ENCODE measurements at regions of chr20 and their contacts with region 1.

Region 1: GRCh38 chr20:8722276-8722928 is 346.5 kb upstream of the PLCB4 start:
- DNase-seq: peak; percentile 81
- H3K4me3 ChIP-seq: no peak overlapping the region
- H3K27ac ChIP-seq: no peak overlapping the region
- H3K4me1 ChIP-seq: peaks cover 11% of the 10 kb centered on the region
- H3K27me3 ChIP-seq: no peaks in the 10 kb centered on the region
- CTCF ChIP-seq: peak; percentile 84

Region 2: DNA sequence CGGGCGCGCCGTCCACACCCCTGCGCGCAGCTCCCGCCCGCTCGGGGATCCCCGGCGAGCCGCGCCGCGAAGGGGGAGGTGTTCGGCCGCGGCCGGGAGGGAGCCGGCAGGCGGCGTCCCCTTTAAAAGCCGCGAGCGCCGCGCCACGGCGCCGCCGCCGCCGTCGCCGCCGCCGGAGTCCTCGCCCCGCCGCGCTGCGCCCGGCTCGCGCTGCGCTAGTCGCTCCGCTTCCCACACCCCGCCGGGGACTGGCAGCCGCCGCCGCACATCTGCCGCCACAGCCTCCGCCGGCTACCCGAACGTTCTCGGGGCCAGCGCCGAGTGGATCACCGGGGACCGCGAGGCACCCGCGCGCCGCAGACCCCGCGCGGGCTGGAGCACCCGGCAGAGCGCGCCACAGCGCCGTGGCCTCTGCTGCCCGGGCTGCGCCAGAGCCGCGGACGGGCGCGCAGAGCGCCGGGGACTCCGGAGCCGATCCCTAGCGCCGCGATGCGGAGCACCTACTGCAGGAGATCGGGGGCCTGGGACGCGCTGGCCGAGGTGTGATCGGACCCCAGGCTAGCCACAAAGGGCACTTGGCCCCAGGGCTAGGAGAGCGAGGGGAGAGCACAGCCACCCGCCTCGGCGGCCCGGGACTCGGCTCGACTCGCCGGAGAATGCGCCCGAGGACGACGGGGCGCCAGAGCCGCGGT is 1954.7 kb before region 1 on chr20 and contains the start of gene BMP2:
- CTCF ChIA-PET with region 1: interaction called, 3 read pairs
- POLR2A ChIA-PET with region 1: no interaction called
- intact Hi-C with region 1: loop called (anchors 5 kb)
- DNase-seq: peak; percentile 49
- H3K4me3 ChIP-seq: peak within 1 kb of the TSS; percentile 41
- H3K27ac ChIP-seq: no peak within 1 kb of the TSS
- H3K4me1 ChIP-seq: peaks cover 5% of the 10 kb centered on the region
- H3K27me3 ChIP-seq: peaks cover 72% of the 10 kb centered on the region
- CTCF ChIP-seq: no peak
- total RNA-seq, gene BMP2: not detected in 2 replicates

Region 3: DNA sequence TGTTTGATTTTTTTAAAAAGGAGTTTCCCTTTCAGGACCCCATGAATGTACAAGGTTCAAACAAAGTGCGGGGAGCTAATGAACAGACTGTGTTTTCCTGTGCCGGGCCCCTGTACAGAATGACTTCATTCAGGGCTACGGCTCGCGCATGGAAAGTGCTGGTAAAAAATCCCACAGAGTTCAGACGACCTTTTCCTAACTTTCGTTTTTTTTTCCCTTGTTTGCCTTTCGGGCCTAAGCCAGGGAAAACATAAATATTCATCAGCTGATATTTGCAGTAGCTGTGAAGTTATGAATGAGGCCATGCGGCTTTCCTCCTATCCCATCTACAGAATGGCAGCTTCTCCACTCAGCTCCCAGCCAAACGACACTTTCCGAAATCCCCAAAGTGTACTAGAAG is 856.1 kb before region 1 on chr20:
- CTCF ChIA-PET with region 1: no interaction called
- POLR2A ChIA-PET with region 1: no interaction called
- intact Hi-C with region 1: loop called (anchors 10 kb)
- DNase-seq: no peak
- H3K4me3 ChIP-seq: no peak overlapping the region
- H3K27ac ChIP-seq: no peak overlapping the region
- H3K4me1 ChIP-seq: no peaks in the 10 kb centered on the region
- H3K27me3 ChIP-seq: peaks cover 72% of the 10 kb centered on the region
- CTCF ChIP-seq: no peak

Region 4: DNA sequence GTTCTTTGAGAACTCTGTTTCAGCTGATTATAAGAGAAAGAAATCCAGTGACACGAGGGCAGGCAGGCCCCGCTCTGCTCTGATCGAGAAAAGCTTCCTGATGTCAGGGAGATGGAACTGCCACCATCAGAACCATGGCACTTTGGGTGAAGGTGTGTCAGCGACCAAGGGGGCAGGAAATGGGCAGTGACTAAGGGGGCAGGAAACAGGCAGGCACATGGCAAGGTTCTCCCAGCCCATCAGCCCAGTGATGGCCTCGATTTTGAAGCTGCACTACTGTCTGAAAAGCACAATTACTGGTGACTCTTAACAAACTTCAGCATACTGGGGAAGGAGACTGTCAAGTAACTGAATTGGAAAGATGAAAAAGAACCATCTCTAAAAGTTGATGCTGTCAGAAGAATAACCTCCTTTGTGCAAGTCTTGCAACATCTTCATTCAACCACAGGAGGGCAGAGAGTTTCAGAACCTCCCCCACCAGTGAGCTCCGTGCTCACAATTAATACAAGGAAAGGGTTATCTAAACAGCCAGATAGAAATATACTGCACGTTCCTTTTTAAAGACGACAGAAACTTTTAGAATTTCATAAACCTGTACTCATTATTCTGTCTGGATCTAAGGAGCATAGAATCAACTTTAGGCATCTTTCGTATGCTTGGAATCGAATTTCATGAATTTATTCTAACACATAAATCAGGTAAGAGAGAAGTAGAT is 741.9 kb before region 1 on chr20:
- CTCF ChIA-PET with region 1: interaction called, 6 read pairs
- POLR2A ChIA-PET with region 1: no interaction called
- intact Hi-C with region 1: loop called (anchors 1 kb)
- DNase-seq: peak; percentile 58
- H3K4me3 ChIP-seq: no peak overlapping the region
- H3K27ac ChIP-seq: no peak overlapping the region
- H3K4me1 ChIP-seq: no peaks in the 10 kb centered on the region
- H3K27me3 ChIP-seq: no peaks in the 10 kb centered on the region
- CTCF ChIP-seq: peak; percentile 57

Region 5: DNA sequence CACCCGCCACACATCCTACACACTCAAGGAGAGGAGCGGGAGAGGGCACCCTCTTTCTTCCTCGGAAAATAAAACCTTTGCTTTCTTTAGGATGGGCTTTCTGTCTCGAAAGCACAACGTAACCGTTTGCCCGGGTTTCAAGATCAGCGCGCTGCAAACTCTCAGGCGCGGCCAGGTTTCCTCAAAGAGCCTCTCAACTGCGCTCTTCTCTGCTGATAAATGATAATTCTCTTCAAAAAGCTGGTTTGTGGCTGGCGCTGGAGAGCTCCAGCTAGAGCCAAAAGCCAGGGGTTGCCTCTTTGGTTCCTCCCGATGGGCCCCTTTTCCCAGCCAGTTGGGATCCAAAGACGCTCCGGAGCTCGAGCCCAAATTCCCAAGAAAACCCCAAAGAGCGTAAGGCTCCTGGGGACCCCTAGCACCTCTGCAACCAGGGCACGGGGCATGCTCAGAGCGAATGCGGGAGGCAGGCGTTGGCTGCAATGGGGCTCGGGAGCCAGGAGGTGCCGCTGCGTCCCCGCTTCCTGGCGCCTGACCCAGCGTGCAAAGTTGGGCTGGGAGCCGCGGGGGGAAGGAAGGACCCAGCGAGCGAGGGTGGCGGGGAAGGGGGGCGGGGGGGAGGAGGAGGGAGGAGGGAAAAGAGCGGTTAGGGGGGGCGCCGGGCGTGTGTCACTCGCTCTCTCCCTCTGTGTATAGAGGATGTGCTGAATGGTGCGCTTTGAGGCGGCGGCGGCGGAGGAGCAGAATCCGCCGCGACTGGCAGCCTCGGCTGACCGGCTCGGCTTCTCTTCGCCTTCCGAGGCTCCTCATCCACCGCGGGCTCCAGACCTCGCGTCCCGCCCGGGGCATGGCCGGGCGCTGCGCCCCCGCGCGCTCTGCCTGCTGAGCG is 590.6 kb before region 1 on chr20 and contains the start of gene PLCB1:
- CTCF ChIA-PET with region 1: interaction called, 6 read pairs
- POLR2A ChIA-PET with region 1: no interaction called
- intact Hi-C with region 1: loop called (anchors 2 kb)
- DNase-seq: peak; percentile 90
- H3K4me3 ChIP-seq: peak within 1 kb of the TSS; percentile 74
- H3K27ac ChIP-seq: peak within 1 kb of the TSS; percentile 63
- H3K4me1 ChIP-seq: peaks cover 16% of the 10 kb centered on the region
- H3K27me3 ChIP-seq: peaks cover 17% of the 10 kb centered on the region
- CTCF ChIP-seq: peak; percentile 85
- total RNA-seq, gene PLCB1: 6.8 and 10.4 TPM in 2 replicates